Activated CD8-positive, alpha-beta T cell treated with anti-CD3 and anti-CD28 coated beads, Interleukin-2, amount 10 ng/mL, durations not matched to agents 7 days and 5 days (primary cell): ENCODE measurements at regions of chr12 and their contacts with region 1.

Region 1: GRCh38 chr12:107131832-107132616 is 38.7 kb upstream of the CRY1 start:
- DNase-seq: peak; percentile 33
- ATAC-seq: no peak
- H3K4me3 Mint-ChIP-seq: no peak overlapping the region
- H3K27ac Mint-ChIP-seq: no peak overlapping the region
- H3K4me1 Mint-ChIP-seq: peaks cover 6% of the 10 kb centered on the region
- H3K27me3 Mint-ChIP-seq: peaks cover 3% of the 10 kb centered on the region

Region 2: GRCh38 chr12:106974511-106974910 is 157.5 kb before region 1 on chr12:
- CTCF ChIA-PET with region 1: no interaction called
- POLR2A ChIA-PET with region 1: no interaction called
- DNase-seq: no peak
- ATAC-seq: no peak
- H3K4me3 Mint-ChIP-seq: no peak overlapping the region
- H3K27ac Mint-ChIP-seq: no peak overlapping the region
- H3K4me1 Mint-ChIP-seq: peaks cover 2% of the 10 kb centered on the region
- H3K27me3 Mint-ChIP-seq: no peaks in the 10 kb centered on the region

Region 3: GRCh38 chr12:107027636-107028053 is 104.4 kb before region 1 on chr12:
- CTCF ChIA-PET with region 1: no interaction called
- POLR2A ChIA-PET with region 1: no interaction called
- DNase-seq: no peak
- ATAC-seq: peak; percentile 88
- H3K4me3 Mint-ChIP-seq: no peak overlapping the region
- H3K27ac Mint-ChIP-seq: peak overlapping the region; percentile 50
- H3K4me1 Mint-ChIP-seq: peaks cover 9% of the 10 kb centered on the region
- H3K27me3 Mint-ChIP-seq: no peaks in the 10 kb centered on the region

Region 4: DNA sequence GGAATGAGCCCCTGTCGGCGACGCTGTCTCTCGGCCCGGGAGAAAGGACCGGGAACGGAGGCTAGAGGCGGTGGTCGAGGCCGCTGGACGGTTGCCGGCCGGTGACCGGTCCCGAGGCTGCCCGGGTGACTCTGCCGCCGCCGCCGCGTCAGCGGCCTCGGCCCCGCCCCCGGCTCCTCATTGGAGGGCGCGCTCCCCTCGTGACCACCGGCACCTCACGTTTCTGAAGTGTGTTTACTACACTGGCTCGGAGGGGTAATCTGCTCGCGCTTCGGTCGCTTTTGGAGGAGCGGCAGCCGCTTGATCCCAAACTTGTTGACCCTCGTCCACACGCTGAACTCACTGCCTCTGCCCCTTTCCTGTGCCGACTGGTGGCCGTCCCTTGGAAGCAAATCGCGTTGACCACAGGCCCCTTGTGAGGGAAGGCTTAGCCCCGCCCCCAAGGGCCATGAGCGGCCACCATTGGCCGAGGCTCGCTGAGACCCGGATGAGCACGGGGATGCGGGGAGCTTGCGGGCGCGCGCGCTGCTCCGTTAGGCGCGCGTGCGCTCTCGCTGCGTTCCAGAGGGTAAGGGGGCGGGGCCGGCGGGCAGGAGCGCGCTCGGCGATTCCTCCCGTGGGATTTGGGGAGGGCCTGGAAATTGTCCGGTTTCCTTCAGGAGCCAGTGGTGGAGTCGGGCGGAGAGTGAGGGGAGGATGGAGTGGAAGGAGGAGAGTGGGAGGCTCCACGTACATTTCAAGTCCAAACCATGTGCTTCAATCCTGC is 38.4 kb before region 1 on chr12 and contains the start of gene CRY1:
- CTCF ChIA-PET with region 1: interaction called, 13 read pairs
- POLR2A ChIA-PET with region 1: interaction called, 8 read pairs
- DNase-seq: peak; percentile 94
- ATAC-seq: peak; percentile 89
- H3K4me3 Mint-ChIP-seq: no peak within 1 kb of the TSS
- H3K27ac Mint-ChIP-seq: no peak within 1 kb of the TSS
- H3K4me1 Mint-ChIP-seq: peaks cover 5% of the 10 kb centered on the region
- H3K27me3 Mint-ChIP-seq: peaks cover 9% of the 10 kb centered on the region
- total RNA-seq, gene CRY1: 13.5 to 15.7 TPM

Region 5: DNA sequence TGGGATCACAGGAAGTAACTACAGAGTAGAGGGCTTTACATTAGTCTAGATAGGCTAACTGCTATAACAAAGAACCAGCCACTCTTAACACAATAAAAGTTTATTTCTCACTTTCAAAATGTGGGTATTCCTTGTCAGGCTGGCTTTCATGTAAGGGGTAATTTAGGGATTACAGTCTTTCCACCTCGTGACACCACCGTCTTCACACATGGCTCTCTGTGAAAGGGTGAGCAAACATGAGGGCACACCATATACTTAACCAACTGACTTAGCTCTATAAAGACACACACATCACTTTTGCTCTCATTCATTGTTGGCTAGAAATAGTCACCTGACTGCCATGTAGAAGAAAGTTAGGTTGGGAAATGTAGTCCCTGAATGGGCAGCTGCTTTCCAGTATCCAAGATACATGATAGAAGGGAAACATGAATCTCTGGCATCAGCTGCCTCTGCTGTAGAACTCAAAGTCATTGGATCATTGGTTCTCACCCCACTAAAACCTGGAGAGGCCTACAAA is 27.4 kb after region 1 on chr12:
- CTCF ChIA-PET with region 1: interaction called, 13 read pairs
- POLR2A ChIA-PET with region 1: no interaction called
- DNase-seq: no peak
- ATAC-seq: no peak
- H3K4me3 Mint-ChIP-seq: no peak overlapping the region
- H3K27ac Mint-ChIP-seq: no peak overlapping the region
- H3K4me1 Mint-ChIP-seq: no peaks in the 10 kb centered on the region
- H3K27me3 Mint-ChIP-seq: peaks cover 42% of the 10 kb centered on the region

Region 6: GRCh38 chr12:107317751-107318613 is 186.0 kb after region 1 on chr12:
- CTCF ChIA-PET with region 1: interaction called, 48 read pairs
- POLR2A ChIA-PET with region 1: no interaction called
- DNase-seq: peak; percentile 95
- ATAC-seq: peak; percentile 77
- H3K4me3 Mint-ChIP-seq: peak overlapping the region; percentile 88
- H3K27ac Mint-ChIP-seq: peak overlapping the region; percentile 18
- H3K4me1 Mint-ChIP-seq: peaks cover 34% of the 10 kb centered on the region
- H3K27me3 Mint-ChIP-seq: peaks cover 32% of the 10 kb centered on the region

Region 7: DNA sequence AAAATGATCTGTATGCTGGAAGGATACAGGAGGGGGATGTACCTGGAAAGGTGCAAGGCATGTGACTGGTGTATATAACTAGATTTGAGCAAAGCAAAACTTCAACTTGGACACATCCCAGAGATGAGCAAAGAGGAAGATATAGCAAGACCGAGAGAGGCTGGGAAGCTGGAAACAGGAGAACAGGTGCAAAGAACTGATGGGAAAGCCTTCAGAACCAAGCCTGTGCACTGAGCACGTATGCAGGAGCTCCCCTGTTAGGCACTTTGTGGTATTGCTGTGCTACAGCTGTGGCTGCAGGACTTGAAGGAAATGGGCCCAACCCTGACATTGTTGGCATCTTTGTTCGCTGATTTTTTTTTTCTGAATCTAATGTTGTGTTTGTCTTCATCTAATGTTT is 432.9 kb after region 1 on chr12:
- CTCF ChIA-PET with region 1: interaction called, 10 read pairs
- POLR2A ChIA-PET with region 1: no interaction called
- DNase-seq: peak; percentile 28
- ATAC-seq: peak; percentile 68
- H3K4me3 Mint-ChIP-seq: no peak overlapping the region
- H3K27ac Mint-ChIP-seq: no peak overlapping the region
- H3K4me1 Mint-ChIP-seq: peaks cover 20% of the 10 kb centered on the region
- H3K27me3 Mint-ChIP-seq: no peaks in the 10 kb centered on the region

Region 8: GRCh38 chr12:107622005-107622404 is 490.0 kb after region 1 on chr12:
- CTCF ChIA-PET with region 1: interaction called, 11 read pairs
- POLR2A ChIA-PET with region 1: no interaction called
- DNase-seq: no peak
- ATAC-seq: no peak
- H3K4me3 Mint-ChIP-seq: no peak overlapping the region
- H3K27ac Mint-ChIP-seq: no peak overlapping the region
- H3K4me1 Mint-ChIP-seq: no peaks in the 10 kb centered on the region
- H3K27me3 Mint-ChIP-seq: no peaks in the 10 kb centered on the region